ENCODE measurements at regions of chr3 and their contacts with region 1.

Region 1: DNA sequence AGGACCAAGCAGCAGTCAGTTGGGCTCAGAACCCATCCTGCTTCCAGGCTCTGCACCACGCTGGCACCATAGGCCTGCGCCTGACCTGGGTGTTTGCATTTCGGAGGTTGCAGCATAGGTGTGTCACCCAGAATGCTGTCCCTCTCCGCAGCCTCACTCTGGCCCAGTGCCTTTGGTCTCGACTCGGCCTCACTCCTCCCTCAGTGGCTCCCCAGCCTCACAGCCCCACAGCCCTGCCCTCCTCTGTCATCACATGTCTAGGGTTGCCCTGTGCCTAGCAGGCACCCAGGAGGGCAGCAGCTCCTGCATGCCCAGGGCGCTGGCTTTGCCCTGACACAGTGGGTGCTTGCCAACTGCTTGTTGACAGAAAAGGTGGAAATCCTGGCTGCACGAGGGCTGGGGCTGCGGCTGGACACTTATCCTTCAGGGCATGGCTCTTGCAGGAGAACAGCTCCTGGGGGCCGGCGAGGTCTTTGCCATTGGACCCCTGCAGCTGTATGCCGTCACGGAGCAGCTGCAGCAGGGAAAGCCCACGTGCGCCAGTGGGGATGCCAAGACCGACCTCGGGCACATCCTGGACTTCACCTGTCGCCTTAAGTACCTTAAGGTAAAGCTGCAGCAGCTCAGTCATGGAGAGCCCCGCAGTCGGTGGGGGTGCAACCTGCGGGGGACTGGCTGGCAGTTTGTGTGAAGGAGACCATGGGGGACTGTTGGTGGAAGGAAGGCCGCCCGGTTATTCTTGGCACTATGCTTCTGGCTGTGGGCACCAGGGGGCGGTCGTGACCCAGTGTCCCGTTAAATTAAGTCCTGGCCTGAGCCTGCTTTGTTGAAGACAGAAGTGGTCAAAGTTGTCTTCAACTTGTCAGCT is 16.2 kb downstream of the NISCH start:
- DNase-seq: peak; percentile 67
- H3K4me3 ChIP-seq: no peak overlapping the region
- H3K27ac ChIP-seq: peak overlapping the region; percentile 45 to 82
- H3K4me1 ChIP-seq: peaks cover 31% of the 10 kb centered on the region
- H3K27me3 ChIP-seq: no peaks in the 10 kb centered on the region
- CTCF ChIP-seq: peak; percentile 68 to 80 (median 74)
- POLR2A ChIP-seq: no peak

Region 2: DNA sequence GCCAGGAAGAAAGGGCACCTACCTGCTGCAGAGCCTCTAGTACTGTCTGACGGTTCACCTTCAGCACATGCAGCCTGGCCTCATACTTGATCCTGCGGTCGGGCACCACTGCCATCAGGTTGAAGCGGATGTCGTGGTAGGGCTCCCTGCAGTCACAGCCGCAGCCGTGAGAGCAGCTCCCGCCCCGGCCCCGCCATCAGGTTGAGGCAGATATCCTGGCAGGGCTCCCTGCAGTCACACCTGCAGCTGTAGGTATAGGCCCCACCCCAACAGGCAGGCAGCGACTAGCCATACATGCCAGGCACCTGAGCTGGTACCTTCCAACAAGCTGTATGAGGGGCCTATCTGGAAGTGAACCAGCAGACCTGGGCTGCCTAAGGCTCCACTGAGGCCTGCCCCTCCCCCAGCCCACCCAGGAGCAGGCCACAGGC is 65.4 kb before region 1 on chr3:
- intact Hi-C with region 1: no loop called
- DNase-seq: peak; percentile 59
- H3K4me3 ChIP-seq: no peak overlapping the region
- H3K27ac ChIP-seq: no peak overlapping the region
- H3K4me1 ChIP-seq: peaks cover 17% of the 10 kb centered on the region
- H3K27me3 ChIP-seq: no peaks in the 10 kb centered on the region
- CTCF ChIP-seq: no peak
- POLR2A ChIP-seq: no peak

Region 3: DNA sequence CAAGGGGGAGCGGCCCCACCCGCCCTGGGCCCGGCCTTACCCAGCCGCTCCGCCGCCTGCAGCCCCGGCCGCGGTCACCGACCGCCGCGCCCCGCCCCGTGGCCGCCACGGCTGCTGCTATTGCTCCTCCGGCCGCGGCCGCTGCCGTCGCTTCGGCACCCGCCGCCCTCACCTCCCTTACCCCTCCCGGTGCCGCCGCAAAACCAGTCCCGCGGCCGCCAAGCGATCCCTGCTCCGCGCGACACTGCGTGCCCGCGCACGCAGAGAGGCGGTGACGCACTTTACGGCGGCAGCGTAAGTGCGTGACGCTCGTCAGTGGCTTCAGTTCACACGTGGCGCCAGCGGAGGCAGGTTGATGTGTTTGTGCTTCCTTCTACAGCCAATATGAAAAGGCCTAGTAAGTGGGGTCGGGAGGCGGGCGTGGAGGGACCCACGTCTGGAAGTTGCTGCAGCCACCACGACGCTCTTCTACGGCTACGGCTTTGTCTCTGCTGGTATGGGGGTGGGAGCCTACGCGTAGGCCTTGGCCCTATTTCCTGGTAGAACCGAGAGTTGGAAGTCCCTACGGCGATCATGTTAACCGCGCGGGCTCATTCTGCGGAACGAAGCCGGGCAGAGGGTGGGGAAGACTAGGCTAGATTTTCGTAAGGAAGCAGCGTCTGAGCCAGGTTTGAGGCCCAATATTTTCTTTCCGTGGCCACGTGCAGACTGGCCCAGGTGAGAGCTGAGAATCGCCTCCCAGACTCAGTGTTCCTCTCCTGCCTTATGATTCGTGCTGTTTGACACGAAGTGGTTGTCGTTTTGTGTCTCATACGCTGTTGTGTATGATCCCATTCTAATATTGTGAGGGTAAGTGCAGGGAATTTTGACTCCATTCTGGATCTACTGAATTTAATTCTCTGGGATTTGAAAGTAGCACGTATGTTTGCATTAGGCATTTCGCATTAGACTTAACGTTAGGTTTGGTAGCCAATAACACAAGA is 214.4 kb after region 1 on chr3 and contains the starts of genes GNL3 and PBRM1:
- intact Hi-C with region 1: loop called (anchors 10 kb)
- DNase-seq: peak; percentile 92
- H3K4me3 ChIP-seq: peak within 1 kb of the TSS; percentile 64 to 86
- H3K27ac ChIP-seq: peak within 1 kb of the TSS; percentile 93 to 99
- H3K4me1 ChIP-seq: peaks cover 3% of the 10 kb centered on the region
- H3K27me3 ChIP-seq: no peaks in the 10 kb centered on the region
- CTCF ChIP-seq: no peak
- POLR2A ChIP-seq: peak; percentile 89
- total RNA-seq, gene GNL3: 50.7 to 116 TPM
- total RNA-seq, gene PBRM1: 72.5 to 77.5 TPM

Measured in prostate gland (tissue), 2 donors.